ENCODE measurements at regions of chr21 and their contacts with region 1.

Region 1: DNA sequence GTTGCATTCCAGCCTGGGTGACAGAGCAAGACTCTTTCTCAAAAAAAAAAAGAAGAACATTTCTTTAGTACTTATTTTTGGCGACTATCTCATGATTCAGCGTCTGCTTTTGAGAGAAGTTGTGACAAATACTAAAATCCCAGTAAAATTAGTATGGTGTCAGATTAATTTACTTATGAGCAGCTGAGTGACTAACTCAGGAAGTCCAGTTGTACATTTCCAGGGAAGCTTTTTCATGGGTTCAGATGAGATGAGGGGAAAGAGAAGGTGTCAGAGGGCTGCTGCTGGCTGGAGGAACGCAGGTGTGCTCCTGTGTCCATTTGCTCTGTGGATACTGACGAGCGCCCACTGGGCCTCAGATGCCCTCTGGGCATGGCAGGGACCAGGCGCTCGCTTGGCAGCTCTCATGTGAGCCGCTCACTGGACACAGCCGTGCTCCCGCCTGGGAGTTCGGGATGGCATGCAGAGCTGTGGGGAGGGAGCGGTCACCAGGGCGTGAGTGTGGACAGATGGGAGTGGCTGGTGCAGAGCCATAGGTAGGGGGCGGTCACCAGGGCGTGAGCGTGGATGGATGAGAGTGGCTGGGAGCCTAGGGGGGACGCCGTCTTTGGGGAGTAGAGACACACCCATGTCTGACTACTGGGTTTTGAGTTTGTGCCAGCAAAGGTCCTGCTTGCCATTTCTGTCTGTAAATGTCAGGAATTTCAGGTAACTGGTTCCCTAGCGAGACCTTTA is 55.0 kb downstream of the ADARB1 start:
- DNase-seq: no peak
- ATAC-seq: peak; percentile 64

Region 2: DNA sequence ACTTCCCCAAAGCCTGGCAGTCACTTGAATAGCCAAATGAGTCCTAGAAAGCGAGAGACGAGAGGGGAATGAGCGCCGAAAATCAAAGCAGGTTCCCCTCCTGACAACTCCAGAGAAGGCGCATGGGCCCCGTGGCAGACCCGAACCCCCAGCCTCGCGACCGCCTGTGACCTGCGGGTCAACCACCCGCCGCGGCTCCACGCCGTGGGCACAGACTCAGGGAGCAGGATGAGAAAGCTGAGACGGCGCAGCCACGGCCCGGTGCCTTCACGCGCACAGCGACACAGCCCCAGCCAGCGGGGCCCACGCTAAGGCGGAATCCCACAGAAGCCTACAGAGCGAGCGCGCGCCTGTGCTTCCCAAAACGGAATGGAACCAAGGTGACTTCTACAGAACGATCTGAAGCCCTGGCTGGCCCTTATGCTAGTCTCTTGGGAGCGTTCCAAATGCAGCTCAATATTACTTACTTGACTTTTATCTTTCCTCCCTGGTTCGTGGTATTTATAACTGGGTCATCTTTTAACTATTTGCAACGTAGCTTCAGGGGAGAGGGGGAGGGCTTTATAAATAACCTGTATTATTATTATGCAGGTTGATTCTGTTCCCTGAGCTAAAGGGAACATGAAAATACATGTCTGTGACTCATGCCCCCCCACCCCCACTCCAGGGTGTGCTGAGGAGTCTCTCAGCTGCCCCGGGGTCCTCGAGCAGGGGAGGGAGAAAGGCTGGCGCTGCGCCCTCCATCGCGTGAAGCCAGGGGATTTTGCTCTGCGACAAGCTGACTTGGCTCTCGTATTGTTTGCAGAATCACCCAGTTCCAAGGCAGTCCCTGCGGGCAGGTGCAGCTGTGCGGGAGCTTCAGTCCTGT is 419.7 kb before region 1 on chr21:
- intact Hi-C with region 1: no loop called
- DNase-seq: no peak
- ATAC-seq: no peak

Region 3: GRCh38 chr21:44737706-44738354 is 391.5 kb before region 1 on chr21:
- intact Hi-C with region 1: no loop called
- DNase-seq: no peak
- ATAC-seq: no peak

Region 4: GRCh38 chr21:44958471-44959191 is 170.7 kb before region 1 on chr21:
- intact Hi-C with region 1: loop called in 1 of 2 experiments (anchors 5 kb)
- DNase-seq: peak in 1 of 2 donors; percentile 47
- ATAC-seq: peak; percentile 26